SK-N-SH (cell line): ENCODE measurements at regions of chr18 and their contacts with region 1.

Region 1: GRCh38 chr18:56702946-56703345 is 51.8 kb downstream of the WDR7 start:
- DNase-seq: peak; percentile 54
- H3K4me3 ChIP-seq: no peak overlapping the region
- H3K27ac ChIP-seq: no peak overlapping the region
- H3K4me1 ChIP-seq: no peaks in the 10 kb centered on the region
- H3K27me3 ChIP-seq: no peaks in the 10 kb centered on the region
- CTCF ChIP-seq: peak; percentile 65
- EP300 ChIP-seq: no peak
- RAD21 ChIP-seq: peak; percentile 73

Region 2: DNA sequence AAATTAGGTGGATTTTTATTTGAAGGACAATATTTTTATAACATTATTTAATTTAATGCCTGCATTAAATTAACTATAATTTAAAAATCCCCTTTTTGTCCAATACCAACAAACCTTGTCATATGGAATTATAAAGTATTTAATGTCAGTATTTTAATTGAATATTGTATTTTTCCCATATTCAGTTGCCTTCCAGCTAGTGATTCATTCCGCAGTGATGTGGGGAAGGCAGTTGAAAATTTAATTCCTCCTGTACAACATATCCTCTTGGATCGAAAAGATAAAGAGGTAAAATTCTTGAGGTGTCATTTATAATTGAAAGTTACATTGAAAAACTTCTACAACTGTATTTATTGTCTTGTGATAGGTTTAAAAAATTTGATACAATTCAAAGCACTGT is 11.4 kb before region 1 on chr18:
- CTCF ChIA-PET with region 1: interaction called, 18 read pairs
- POLR2A ChIA-PET with region 1: no interaction called
- DNase-seq: no peak
- H3K4me3 ChIP-seq: no peak overlapping the region
- H3K27ac ChIP-seq: peak overlapping the region in 1 of 2 experiments; percentile 11; a peak in 1 of 4 replicates
- H3K4me1 ChIP-seq: no peaks in the 10 kb centered on the region
- H3K27me3 ChIP-seq: no peaks in the 10 kb centered on the region
- CTCF ChIP-seq: no peak
- EP300 ChIP-seq: no peak
- RAD21 ChIP-seq: no peak